IMR-90 (cell line): ENCODE measurements at regions of chr11 and their contacts with region 1.

Region 1: GRCh38 chr11:15327786-15328231 is 213.1 kb downstream of the INSC start:
- DNase-seq: peak; percentile 51
- ATAC-seq: peak; percentile 97
- H3K4me3 ChIP-seq: no peak overlapping the region
- H3K27ac ChIP-seq: no peak overlapping the region
- H3K4me1 ChIP-seq: no peaks in the 10 kb centered on the region
- H3K27me3 ChIP-seq: peaks cover 1% of the 10 kb centered on the region; the same call in 1 of the 2 replicates
- CTCF ChIP-seq: peak; percentile 71
- POLR2A ChIP-seq: no peak
- RAD21 ChIP-seq: peak; percentile 79

Region 2: DNA sequence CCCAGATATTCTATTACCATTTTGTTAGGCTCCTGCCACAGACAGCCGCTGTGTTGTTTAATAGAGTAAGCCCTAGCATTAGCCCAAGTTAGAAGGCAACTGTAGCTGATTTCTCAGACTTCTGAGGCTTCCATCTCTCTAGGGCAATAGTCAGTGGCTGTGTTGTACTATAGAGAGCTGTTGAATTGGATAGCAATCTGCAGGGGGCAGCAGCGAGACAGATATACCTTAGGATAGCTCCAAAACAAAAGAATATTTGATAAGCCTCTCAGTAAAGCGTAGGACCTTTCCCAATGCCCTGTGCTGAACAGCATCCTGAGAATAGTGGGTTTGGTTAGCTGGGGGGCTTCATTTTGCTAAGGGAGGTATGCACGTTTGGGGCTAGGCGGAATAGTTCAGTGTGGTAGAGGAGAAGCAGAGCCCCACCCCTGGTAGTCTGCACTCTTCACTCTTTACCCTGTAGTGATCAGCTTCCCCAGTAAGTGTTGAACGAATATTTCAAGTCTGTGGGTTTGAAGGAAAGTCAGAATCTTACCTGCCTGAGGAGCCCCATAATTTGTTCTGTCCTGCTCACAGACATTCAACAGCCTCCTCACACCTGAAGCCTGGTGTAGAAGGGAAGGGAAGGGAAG is 302.0 kb after region 1 on chr11:
- CTCF ChIA-PET with region 1: no interaction called
- POLR2A ChIA-PET with region 1: no interaction called
- dilution Hi-C with region 1: no loop called
- in situ Hi-C with region 1: no loop called
- intact Hi-C with region 1: loop called (anchors 10 kb)
- DNase-seq: no peak
- ATAC-seq: peak; percentile 28; the same call in 1 of the 2 replicates
- H3K4me3 ChIP-seq: no peak overlapping the region
- H3K27ac ChIP-seq: no peak overlapping the region
- H3K4me1 ChIP-seq: peaks cover 7% of the 10 kb centered on the region
- H3K27me3 ChIP-seq: no peaks in the 10 kb centered on the region; the same call in 1 of the 2 replicates
- CTCF ChIP-seq: peak; percentile 36; the same call in 1 of the 2 replicates
- POLR2A ChIP-seq: no peak
- RAD21 ChIP-seq: 0 out of 2 replicates have a peak, but pooled peaks have one; percentile 6

Region 3: DNA sequence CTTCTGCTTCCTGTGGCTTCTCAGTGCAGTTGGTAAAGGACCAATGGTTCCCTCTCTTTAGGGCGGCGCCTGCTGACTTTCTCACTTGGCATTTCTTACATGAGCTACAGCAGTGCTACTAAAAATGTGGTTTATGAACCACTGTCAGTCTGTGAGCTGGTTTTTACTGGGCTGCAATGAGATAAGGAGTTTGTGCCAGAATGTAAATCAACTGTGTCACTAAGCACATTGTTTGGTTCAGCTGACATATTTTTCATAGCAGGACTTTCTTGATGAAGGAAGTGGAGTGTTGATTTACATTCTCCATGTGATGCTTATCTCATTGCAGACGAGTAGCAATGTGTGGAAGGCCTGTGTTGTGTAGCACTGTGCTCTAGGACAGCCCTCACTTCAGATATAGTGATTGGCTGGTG is 565.3 kb after region 1 on chr11:
- CTCF ChIA-PET with region 1: no interaction called
- POLR2A ChIA-PET with region 1: no interaction called
- dilution Hi-C with region 1: no loop called
- in situ Hi-C with region 1: no loop called
- intact Hi-C with region 1: loop called (anchors 10 kb)
- DNase-seq: peak; percentile 89
- ATAC-seq: peak; percentile 77
- H3K4me3 ChIP-seq: no peak overlapping the region
- H3K27ac ChIP-seq: peak overlapping the region; percentile 88
- H3K4me1 ChIP-seq: peaks cover 44% of the 10 kb centered on the region
- H3K27me3 ChIP-seq: no peaks in the 10 kb centered on the region
- CTCF ChIP-seq: no peak
- POLR2A ChIP-seq: no peak
- RAD21 ChIP-seq: no peak; the same call in 1 of the 2 replicates

Region 4: DNA sequence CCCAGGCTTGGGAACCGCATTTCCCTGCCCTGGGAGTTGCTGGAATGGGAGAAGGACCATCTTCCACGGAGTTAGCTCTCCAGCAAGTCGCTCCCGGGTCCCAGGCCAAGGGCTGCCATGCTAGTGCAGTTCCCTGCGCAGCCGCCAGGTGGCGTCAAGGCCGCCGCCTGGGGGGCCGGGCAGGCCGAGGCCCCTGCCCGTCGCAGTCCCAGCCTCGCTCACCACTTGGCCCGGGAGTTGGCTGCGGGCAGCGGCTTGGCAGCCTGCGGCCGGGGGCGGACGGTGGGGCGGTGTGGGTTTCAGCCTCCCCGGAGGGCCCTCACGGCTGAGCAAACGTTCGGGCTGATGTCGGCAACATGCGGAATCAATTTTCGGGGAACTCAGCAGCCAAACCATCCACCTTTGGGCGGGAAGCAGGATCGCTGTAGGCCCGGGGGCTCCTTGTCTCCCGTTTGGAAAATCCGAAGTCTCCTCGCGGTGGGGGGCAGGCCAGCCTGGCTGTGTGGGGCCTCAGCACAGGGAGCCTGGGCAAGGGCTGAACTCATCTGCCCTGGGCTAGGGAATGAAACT is 613.5 kb after region 1 on chr11:
- CTCF ChIA-PET with region 1: no interaction called
- POLR2A ChIA-PET with region 1: no interaction called
- dilution Hi-C with region 1: no loop called
- in situ Hi-C with region 1: no loop called
- intact Hi-C with region 1: no loop called
- DNase-seq: no peak
- ATAC-seq: no peak
- H3K4me3 ChIP-seq: no peak overlapping the region
- H3K27ac ChIP-seq: no peak overlapping the region
- H3K4me1 ChIP-seq: peaks cover 10% of the 10 kb centered on the region
- H3K27me3 ChIP-seq: no peaks in the 10 kb centered on the region
- CTCF ChIP-seq: peak; percentile 30
- POLR2A ChIP-seq: no peak
- RAD21 ChIP-seq: peak; percentile 51

Region 5: GRCh38 chr11:15988693-15989231 is 661.0 kb after region 1 on chr11:
- CTCF ChIA-PET with region 1: no interaction called
- POLR2A ChIA-PET with region 1: no interaction called
- dilution Hi-C with region 1: no loop called
- in situ Hi-C with region 1: no loop called
- intact Hi-C with region 1: loop called (anchors 10 kb)
- DNase-seq: no peak
- ATAC-seq: no peak
- H3K4me3 ChIP-seq: no peak overlapping the region
- H3K27ac ChIP-seq: peak overlapping the region; percentile 73; the same call in 1 of the 2 replicates
- H3K4me1 ChIP-seq: peaks cover 22% of the 10 kb centered on the region
- H3K27me3 ChIP-seq: no peaks in the 10 kb centered on the region
- CTCF ChIP-seq: no peak
- POLR2A ChIP-seq: no peak
- RAD21 ChIP-seq: 0 out of 2 replicates have a peak, but pooled peaks have one; percentile 24

Region 6: DNA sequence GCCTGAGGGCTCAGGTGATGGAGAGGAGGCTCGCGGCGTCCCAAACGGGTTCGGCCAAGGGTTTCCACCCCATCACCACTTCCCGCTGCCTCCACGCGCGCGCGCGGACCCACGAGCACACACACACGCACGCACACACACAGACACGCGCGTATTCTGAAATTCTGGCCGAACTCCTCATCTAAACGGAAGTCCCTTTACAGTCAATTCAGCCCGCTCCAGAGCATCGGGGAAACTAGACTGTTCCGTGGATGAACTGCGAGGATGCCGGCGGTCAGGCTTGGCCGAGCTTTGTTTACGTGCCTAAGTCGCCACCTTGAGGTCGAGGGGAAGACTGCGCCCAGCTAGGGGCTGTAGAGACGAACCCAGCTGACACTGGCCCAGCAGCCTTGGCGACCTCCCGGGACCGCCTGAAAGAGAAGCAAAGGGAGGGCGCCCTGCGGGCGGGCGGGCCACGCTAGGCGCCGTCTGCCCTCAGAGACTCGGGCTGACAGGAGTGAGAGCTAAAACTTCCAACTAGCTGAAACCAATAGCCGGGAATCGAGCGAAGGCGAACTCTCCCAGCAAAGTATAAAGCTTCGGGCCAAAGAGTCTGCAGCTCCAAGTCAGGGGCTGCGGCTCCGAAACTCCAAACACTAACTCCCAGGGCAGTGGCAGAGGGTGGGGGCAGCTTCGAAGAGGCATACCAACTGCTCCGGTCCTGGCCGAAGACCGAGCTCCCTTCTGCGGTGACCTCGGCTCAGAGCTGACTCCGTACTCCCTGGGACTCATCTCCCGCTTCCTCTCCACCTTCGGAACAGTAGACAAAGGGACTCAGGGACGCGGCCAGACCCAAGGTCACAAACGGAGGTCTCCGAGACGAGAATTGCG is 1285.9 kb after region 1 on chr11:
- CTCF ChIA-PET with region 1: interaction called, 4 read pairs
- POLR2A ChIA-PET with region 1: no interaction called
- dilution Hi-C with region 1: no loop called
- in situ Hi-C with region 1: loop called (anchors 10 kb)
- intact Hi-C with region 1: loop called (anchors 2 kb)
- DNase-seq: peak; percentile 83
- ATAC-seq: peak; percentile 97
- H3K4me3 ChIP-seq: peak overlapping the region; percentile 67
- H3K27ac ChIP-seq: peak overlapping the region; percentile 36
- H3K4me1 ChIP-seq: peaks cover 5% of the 10 kb centered on the region; the same call in 1 of the 2 replicates
- H3K27me3 ChIP-seq: 0 out of 2 replicates have a peak, but pooled peaks cover 2% of the 10 kb centered on the region
- CTCF ChIP-seq: peak; percentile 92
- POLR2A ChIP-seq: no peak
- RAD21 ChIP-seq: peak; percentile 96

Region 7: GRCh38 chr11:16785520-16786128 is 1457.8 kb after region 1 on chr11:
- CTCF ChIA-PET with region 1: no interaction called
- POLR2A ChIA-PET with region 1: no interaction called
- dilution Hi-C with region 1: no loop called
- in situ Hi-C with region 1: no loop called
- intact Hi-C with region 1: loop called (anchors 1 kb)
- DNase-seq: peak; percentile 75
- ATAC-seq: peak; percentile 95
- H3K4me3 ChIP-seq: no peak overlapping the region
- H3K27ac ChIP-seq: no peak overlapping the region
- H3K4me1 ChIP-seq: no peaks in the 10 kb centered on the region
- H3K27me3 ChIP-seq: no peaks in the 10 kb centered on the region; the same call in 1 of the 2 replicates
- CTCF ChIP-seq: peak; percentile 85
- POLR2A ChIP-seq: no peak
- RAD21 ChIP-seq: peak; percentile 79